AG04449 (cell line): ENCODE measurements at regions of chr10 and their contacts with region 1.

Region 1: DNA sequence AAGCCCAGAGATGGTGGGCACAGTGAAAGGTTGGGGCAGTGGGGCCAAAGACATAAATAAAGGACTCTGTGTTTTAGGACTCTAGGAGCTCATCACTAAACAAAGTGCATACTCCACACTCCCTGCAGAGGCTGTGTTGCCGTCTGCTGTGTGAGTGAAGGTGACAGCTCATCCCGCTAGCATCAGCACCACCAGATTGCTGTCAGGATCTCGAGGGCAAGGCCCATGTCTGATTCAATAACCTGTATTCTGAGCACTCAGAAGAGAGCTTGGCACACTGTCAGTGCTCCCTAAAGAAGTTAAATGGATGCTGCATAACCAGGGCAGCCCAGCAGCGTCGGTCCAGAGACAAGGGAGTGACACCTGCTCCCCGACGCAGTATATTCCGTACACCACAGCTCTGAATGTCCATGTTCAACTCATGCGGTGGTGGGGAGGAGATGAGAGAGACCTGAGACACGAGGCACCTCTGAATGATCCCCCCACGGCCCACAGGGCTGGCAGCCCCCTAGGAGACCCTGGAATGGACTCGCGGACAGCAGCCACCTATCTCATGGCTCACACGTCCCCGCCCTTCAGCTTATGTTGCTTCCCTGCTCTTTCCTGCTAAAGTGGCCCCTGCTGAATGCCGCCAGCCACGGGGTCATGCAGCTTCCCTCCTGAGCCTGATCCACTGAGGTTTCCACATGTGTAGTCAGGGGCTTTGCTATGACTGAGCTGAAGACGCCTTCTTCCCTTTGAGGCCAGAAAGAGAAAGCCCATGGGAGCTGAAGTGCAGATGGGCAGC is 132.7 kb upstream of the KCNMA1 start:
- DNase-seq: no peak
- H3K4me3 ChIP-seq: no peak overlapping the region
- CTCF ChIP-seq: no peak

Region 2: DNA sequence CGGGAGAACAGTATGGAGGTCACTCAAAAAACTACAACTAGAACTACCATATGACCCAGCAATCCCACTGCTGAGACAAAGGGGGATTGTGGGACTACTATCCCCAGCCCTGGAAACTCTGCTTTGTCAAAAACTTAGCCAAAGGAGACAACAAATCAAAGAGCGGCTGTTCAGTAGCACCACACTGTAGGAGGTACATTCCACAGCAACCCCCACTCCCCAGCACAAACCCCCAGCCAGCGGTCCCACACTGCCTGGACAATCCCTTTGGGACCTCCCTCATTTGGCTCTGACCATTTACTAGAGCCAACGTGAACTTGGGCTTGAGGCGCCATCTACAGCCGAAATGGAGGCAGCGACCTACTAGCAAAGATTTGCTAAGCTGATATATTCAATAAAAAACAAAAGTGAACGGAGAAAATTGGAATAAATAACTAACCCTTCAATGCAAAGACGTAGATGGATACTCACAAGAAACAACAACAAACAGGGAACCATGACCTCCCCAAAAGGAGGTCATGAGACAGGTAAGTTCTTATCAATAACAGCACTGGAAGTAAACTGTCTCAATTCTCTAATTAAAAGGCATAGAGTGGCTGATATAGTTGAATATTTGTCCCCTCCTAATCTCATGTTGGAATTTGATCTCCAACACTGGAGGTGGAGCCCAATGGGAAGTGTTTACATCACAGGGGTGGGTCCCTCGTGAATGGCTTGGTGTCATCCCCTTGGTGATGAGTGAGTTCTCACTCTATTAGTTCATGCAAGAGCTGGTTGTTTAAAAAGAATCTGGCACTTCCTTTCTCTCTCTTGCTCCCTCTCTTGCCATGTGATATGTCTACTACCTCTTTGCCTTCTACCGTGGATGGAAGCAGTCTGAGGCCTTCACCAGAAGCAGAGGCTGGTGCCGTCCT is 13.7 kb before region 1 on chr10:
- CTCF ChIA-PET with region 1: interaction called, 25 read pairs
- POLR2A ChIA-PET with region 1: no interaction called
- DNase-seq: no peak
- H3K4me3 ChIP-seq: no peak overlapping the region
- CTCF ChIP-seq: peak; percentile 79

Region 3: DNA sequence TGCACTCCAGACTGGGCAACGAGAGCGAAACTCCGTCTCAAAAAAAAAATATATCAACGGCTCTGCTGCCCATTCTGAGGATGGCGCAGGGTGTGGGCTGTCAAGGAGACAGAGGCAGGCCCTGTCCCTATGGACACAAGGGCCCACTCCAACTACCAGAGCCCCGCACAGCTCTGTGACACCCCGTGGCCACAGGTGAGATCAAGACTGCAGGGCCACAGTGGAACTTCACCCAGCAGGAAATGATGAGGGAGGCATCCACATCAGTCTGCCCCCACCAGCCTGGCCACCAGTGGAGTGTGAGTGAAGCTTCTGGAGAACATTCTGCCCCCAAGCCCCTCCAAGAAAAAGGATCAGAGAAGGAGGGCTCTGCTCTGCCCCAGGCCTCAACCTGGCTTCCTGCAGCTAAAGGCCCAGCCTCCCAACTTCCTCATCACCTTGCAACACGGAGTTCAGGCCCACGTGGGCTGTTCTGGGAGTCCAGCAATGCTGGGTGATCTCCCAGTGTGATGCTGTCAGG is 19.6 kb after region 1 on chr10:
- CTCF ChIA-PET with region 1: no interaction called
- POLR2A ChIA-PET with region 1: no interaction called
- DNase-seq: no peak
- H3K4me3 ChIP-seq: no peak overlapping the region
- CTCF ChIP-seq: no peak